ENCODE measurements at regions of chr16 and their contacts with region 1.

Region 1: GRCh38 chr16:68396481-68396880 is 51.8 kb downstream of the SMPD3 start:
- DNase-seq: peak in 2 of 5 donors; percentile 41
- H3K4me3 ChIP-seq: no peak overlapping the region
- H3K27ac ChIP-seq: no peak overlapping the region
- H3K4me1 ChIP-seq: peaks cover 22% of the 10 kb centered on the region
- H3K27me3 ChIP-seq: no peaks in the 10 kb centered on the region
- CTCF ChIP-seq: peak; percentile 17 to 55 (median 44)
- EP300 ChIP-seq: no peak
- POLR2A ChIP-seq: no peak

Region 2: GRCh38 chr16:68506331-68507053 is 110.0 kb after region 1 on chr16:
- intact Hi-C with region 1: loop called in 2 of 4 experiments (anchors 2 to 5 kb)
- DNase-seq: no peak
- H3K4me3 ChIP-seq: no peak overlapping the region
- H3K27ac ChIP-seq: no peak overlapping the region
- H3K4me1 ChIP-seq: peaks cover 3% of the 10 kb centered on the region
- H3K27me3 ChIP-seq: no peaks in the 10 kb centered on the region
- CTCF ChIP-seq: no peak
- EP300 ChIP-seq: no peak
- POLR2A ChIP-seq: no peak

Region 3: DNA sequence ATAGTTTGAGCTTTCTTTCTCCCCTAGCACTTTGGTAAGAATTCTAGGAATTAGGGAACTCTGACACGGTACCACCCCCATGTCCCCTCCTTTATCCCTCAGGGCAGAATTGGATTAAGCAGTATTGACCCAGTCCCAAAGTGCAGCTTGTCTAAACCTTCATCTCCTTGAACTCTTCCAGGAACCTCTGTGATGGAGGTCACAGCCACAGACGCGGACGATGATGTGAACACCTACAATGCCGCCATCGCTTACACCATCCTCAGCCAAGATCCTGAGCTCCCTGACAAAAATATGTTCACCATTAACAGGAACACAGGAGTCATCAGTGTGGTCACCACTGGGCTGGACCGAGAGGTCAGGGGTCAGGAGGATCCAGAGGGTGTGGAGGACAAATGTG is 415.0 kb after region 1 on chr16:
- intact Hi-C with region 1: no loop called
- DNase-seq: no peak
- H3K4me3 ChIP-seq: no peak overlapping the region
- H3K27ac ChIP-seq: no peak overlapping the region
- H3K4me1 ChIP-seq: no peaks in the 10 kb centered on the region
- H3K27me3 ChIP-seq: no peaks in the 10 kb centered on the region
- CTCF ChIP-seq: no peak
- EP300 ChIP-seq: no peak
- POLR2A ChIP-seq: no peak